Activated T-helper 1 cell treated with anti-CD3 and anti-CD28 coated beads, Interleukin-12 subunit alpha, Interleukin-12 subunit beta, Interleukin-2, Interleukin-4 antibody, amounts not matched to agents 30 ng/mL and 10 ng/mL and 1 ng/mL, durations not matched to agents 14 hours and 24 hours and 36 hours (primary cell): ENCODE measurements at regions of chr13 and their contacts with region 1.

Region 1: DNA sequence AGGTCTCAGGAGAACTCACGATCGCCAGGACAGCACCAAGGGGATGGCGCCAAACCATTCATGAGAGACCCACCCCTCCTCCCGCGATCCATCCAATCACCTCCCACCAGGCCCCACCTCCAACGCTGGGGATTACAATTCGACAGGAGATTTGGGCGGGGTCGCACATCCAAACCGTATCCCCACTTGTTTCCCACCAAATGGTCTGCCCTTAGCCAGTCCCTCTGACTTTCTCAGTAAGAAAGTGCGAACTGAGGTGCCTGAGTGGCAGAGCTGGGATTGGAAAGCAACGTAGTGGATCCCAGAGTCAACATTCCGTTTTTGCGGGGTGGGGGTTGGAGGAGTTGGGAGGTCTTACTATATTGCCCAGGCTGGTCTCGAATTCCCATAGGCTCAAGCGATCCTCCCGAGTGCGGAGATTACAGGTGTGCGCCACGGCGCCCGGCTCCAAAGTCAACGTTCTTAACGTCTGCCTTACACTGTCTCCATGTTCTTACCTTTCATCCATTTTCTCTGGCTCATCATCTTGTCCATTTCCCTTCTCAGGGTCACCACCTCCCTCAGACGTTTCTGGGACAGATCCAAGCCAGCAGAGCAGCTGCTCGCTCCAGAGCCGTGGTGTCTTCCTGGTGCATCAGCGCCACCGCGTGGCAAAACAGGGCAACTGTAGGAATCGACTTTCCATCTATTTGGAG is 102.7 kb upstream of the ABCC4 start:
- DNase-seq: peak; percentile 65
- H3K4me3 Mint-ChIP-seq: peak overlapping the region; percentile 92
- H3K27ac Mint-ChIP-seq: no peak overlapping the region
- H3K4me1 Mint-ChIP-seq: peaks cover 6% of the 10 kb centered on the region
- H3K27me3 Mint-ChIP-seq: peaks cover 2% of the 10 kb centered on the region

Region 2: DNA sequence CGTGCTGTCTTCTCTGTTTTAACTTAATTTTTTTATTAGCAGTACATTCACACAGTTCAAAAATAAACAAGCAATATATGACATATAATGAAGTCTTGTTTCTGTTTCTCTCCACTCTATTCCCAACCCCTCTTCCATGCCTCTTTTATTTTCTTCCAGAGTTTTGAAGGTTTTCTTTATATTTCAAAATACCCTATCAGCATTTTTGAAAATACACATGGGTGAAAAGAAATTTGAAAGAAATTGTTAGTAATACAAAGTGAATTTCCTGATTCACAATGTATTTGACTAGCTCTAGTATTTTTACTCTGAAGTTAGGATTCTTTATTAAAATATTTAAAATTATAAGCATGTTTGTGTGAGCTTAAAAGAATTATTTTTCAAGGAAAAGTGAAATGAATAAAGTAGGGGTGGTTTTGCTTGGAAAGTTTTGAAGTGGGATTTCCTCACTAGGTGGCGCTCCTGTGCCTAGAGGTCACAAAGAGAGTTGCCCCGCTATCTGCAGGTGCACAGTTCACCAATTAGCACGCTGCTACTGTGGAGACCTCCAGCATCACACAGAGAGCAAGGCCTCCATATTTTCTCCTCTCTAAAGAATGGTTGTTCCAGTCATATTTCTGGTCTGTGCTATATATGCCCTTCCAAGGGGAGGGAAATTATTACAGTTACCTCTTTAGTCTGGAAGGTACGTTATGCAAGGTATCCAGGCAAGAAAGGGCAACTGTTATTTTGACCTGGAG is 729.2 kb before region 1 on chr13:
- intact Hi-C with region 1: loop called (anchors 1 kb)
- DNase-seq: no peak
- H3K4me3 Mint-ChIP-seq: no peak overlapping the region
- H3K27ac Mint-ChIP-seq: no peak overlapping the region
- H3K4me1 Mint-ChIP-seq: no peaks in the 10 kb centered on the region
- H3K27me3 Mint-ChIP-seq: peaks cover 19% of the 10 kb centered on the region

Region 3: DNA sequence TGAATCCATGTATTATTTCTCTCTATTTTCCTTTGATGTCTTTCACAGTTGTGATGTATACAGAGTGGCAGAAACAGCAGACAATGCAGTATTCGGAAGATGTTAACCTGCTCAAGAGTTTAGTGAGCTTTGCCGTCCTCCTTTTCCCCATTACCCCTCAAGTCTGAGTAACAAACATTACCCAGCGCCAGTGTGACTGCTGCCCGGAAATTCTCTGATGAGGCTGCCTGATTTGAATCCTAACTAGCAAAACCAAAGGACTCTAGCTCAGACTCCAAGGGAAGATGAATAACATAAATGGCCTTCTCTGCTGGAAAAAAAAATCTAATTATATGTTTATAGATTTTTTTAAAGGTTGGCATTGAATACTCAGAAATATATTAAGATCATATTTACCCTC is 444.3 kb before region 1 on chr13:
- intact Hi-C with region 1: loop called (anchors 5 kb)
- DNase-seq: no peak
- H3K4me3 Mint-ChIP-seq: no peak overlapping the region
- H3K27ac Mint-ChIP-seq: no peak overlapping the region
- H3K4me1 Mint-ChIP-seq: no peaks in the 10 kb centered on the region
- H3K27me3 Mint-ChIP-seq: peaks cover 26% of the 10 kb centered on the region

Region 4: GRCh38 chr13:95301183-95301967 is 102.6 kb before region 1 on chr13 and contains the start of gene ABCC4:
- intact Hi-C with region 1: loop called (anchors 1 kb)
- DNase-seq: peak; percentile 51
- H3K4me3 Mint-ChIP-seq: peak within 1 kb of the TSS; percentile 95
- H3K27ac Mint-ChIP-seq: peak within 1 kb of the TSS; percentile 82
- H3K4me1 Mint-ChIP-seq: peaks cover 33% of the 10 kb centered on the region
- H3K27me3 Mint-ChIP-seq: peaks cover 15% of the 10 kb centered on the region
- total RNA-seq, gene ABCC4: 16.4 and 20.2 TPM in 2 replicates

Region 5: DNA sequence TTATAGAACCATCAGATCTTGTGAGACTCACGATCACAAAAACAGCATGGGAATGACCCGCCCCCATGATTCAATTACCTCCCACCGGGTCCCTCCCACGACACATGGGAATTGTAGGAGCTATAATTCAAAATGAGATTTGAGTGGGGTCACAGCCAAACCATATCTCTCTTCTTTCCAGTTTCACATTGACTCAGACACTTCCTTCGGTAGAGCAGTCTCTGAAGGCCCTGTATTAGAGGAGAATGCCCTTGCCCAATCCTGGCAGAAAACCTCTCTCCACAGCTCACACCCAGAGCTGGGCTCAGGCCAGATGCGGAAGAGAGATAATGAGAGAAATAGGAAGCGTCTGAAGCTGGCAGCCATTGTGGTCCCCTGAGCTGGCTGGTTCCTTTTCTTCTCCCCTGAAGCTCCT is 76.2 kb after region 1 on chr13:
- intact Hi-C with region 1: loop called (anchors 5 kb)
- DNase-seq: no peak
- H3K4me3 Mint-ChIP-seq: peak overlapping the region; percentile 21
- H3K27ac Mint-ChIP-seq: peak overlapping the region; percentile 23
- H3K4me1 Mint-ChIP-seq: peaks cover 25% of the 10 kb centered on the region
- H3K27me3 Mint-ChIP-seq: peaks cover 6% of the 10 kb centered on the region